ENCODE measurements at regions of chr21 and their contacts with region 1.

Region 1: GRCh38 chr21:36419996-36420395 is 34.8 kb downstream of the CHAF1B start:
- DNase-seq: peak; percentile 88 to 91 (median 90)
- H3K4me3 ChIP-seq: no peak overlapping the region
- H3K27ac ChIP-seq: no peak overlapping the region
- H3K4me1 ChIP-seq: peaks cover 0 to 16% (median 9%) of the 10 kb centered on the region in 4 experiments
- H3K27me3 ChIP-seq: no peaks in the 10 kb centered on the region

Region 2: DNA sequence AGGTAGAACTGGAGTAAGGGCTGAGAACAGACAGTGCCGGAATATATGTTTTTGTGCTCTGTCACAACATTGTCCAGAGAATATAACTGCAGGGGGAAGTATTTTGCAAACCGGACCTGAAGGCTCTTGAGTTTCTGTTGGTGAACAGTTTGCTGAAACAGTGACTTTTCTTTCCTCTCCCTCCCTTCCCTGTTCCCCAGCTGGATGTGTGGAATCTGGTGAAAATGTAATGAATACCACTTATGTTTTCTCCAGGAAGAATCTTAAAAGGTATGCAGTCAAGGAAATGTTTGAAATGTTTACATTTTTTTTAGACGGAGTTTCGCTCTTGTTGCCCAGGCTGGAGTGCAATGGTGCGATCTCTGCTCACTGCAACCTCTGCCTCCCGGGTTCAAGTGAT is 11.4 kb before region 1 on chr21:
- CTCF ChIA-PET with region 1: no interaction called
- POLR2A ChIA-PET with region 1: no interaction called
- DNase-seq: no peak
- H3K4me3 ChIP-seq: no peak overlapping the region
- H3K27ac ChIP-seq: no peak overlapping the region
- H3K4me1 ChIP-seq: no peaks in the 10 kb centered on the region
- H3K27me3 ChIP-seq: no peaks in the 10 kb centered on the region

Region 3: GRCh38 chr21:36429947-36430546 is 10.1 kb after region 1 on chr21:
- CTCF ChIA-PET with region 1: interaction called, 12 read pairs
- POLR2A ChIA-PET with region 1: no interaction called
- DNase-seq: peak; percentile 99 to 100 (median 100)
- H3K4me3 ChIP-seq: peak overlapping the region; percentile 6 to 81 (median 62)
- H3K27ac ChIP-seq: peak overlapping the region; percentile 64 to 81
- H3K4me1 ChIP-seq: peaks cover 10 to 43% (median 35%) of the 10 kb centered on the region in 4 experiments
- H3K27me3 ChIP-seq: peaks cover 0 to 2% (median 0%) of the 10 kb centered on the region in 5 experiments

Region 4: GRCh38 chr21:36437745-36438128 is 17.7 kb after region 1 on chr21:
- CTCF ChIA-PET with region 1: interaction called, 11 read pairs
- POLR2A ChIA-PET with region 1: no interaction called
- DNase-seq: peak; percentile 59 to 79 (median 69)
- H3K4me3 ChIP-seq: no peak overlapping the region
- H3K27ac ChIP-seq: no peak overlapping the region
- H3K4me1 ChIP-seq: peaks cover 0 to 15% (median 5%) of the 10 kb centered on the region in 4 experiments
- H3K27me3 ChIP-seq: peaks cover 0 to 2% (median 0%) of the 10 kb centered on the region in 5 experiments

Region 5: GRCh38 chr21:36454093-36454531 is 34.1 kb after region 1 on chr21:
- CTCF ChIA-PET with region 1: interaction called, 18 read pairs
- POLR2A ChIA-PET with region 1: no interaction called
- DNase-seq: peak in 1 of 3 donors; percentile 19
- H3K4me3 ChIP-seq: no peak overlapping the region
- H3K27ac ChIP-seq: peak overlapping the region in 1 of 2 experiments; percentile 65
- H3K4me1 ChIP-seq: peaks cover 0 to 28% (median 13%) of the 10 kb centered on the region in 4 experiments
- H3K27me3 ChIP-seq: no peaks in the 10 kb centered on the region

Region 6: DNA sequence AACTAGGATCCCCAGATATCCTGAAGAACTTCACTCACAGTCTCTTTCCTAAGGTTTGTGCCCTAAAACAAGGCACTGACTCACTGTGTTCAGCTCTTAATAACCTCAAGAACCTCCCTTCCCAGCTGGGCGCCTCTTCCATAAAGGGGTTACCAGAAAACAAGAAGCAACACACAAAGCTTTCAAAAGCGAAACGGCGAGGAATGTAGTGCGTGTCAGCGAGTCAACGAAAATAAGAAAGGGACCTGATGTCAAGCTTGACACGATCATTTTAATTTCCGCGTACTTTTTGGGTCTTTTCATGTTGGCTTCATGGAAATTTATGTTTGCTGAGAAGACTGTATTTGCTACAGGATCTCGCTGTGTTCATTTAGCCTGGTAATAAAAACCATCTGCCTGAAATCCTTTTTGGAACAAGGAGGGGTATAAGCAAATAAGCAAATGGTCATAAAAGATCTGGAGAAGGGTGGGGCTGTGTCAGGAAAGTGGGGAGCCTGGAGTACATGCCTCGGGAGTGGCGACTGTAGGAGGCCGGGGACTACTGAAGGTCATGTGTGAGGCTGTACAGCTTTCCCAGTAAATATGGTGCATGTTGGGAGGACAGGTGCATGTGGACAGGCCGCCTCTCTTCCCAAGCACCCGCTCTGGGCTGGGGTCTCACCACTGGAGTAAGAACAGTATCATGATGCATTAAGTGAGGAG is 71.4 kb after region 1 on chr21:
- CTCF ChIA-PET with region 1: interaction called, 11 read pairs
- POLR2A ChIA-PET with region 1: interaction called, 3 read pairs
- DNase-seq: no peak
- H3K4me3 ChIP-seq: no peak overlapping the region
- H3K27ac ChIP-seq: no peak overlapping the region
- H3K4me1 ChIP-seq: peaks cover 0 to 8% (median 6%) of the 10 kb centered on the region in 4 experiments
- H3K27me3 ChIP-seq: peaks cover 0 to 2% (median 0%) of the 10 kb centered on the region in 5 experiments

Region 7: GRCh38 chr21:36504067-36505058 is 84.4 kb after region 1 on chr21:
- CTCF ChIA-PET with region 1: interaction called, 21 read pairs
- POLR2A ChIA-PET with region 1: no interaction called
- DNase-seq: peak; percentile 45 to 77 (median 67)
- H3K4me3 ChIP-seq: no peak overlapping the region
- H3K27ac ChIP-seq: no peak overlapping the region
- H3K4me1 ChIP-seq: peaks cover 0 to 12% (median 8%) of the 10 kb centered on the region in 4 experiments
- H3K27me3 ChIP-seq: no peaks in the 10 kb centered on the region

Region 8: DNA sequence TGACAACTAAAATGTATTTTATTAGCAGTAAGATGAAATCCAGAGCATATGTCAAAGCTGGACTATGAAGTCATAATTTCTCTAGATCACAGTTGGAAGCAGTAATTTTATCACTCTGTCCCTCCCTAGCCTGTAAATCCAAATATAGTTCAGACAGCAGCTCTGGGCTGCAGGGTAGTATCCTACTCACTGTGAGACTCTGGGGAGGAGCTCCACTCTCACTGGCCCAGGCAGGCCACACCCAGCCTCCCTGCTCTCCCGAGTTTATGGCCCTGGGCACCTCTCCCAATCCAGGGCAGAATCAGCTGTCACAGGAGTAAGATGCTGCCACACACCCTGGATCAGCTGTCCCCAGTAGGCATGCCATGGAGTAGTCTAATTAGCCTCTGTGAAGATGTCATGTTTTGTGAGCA is 415.4 kb after region 1 on chr21:
- CTCF ChIA-PET with region 1: no interaction called
- POLR2A ChIA-PET with region 1: no interaction called
- DNase-seq: no peak
- H3K4me3 ChIP-seq: no peak overlapping the region
- H3K27ac ChIP-seq: no peak overlapping the region
- H3K4me1 ChIP-seq: no peaks in the 10 kb centered on the region
- H3K27me3 ChIP-seq: no peaks in the 10 kb centered on the region